Activated T-helper 1 cell treated with anti-CD3 and anti-CD28 coated beads, Interleukin-12 subunit alpha, Interleukin-12 subunit beta, Interleukin-2, Interleukin-4 antibody, amounts not matched to agents 30 ng/mL and 10 ng/mL and 1 ng/mL, durations not matched to agents 14 hours and 24 hours and 36 hours (primary cell): ENCODE measurements at regions of chr3 and their contacts with region 1.

Region 1: DNA sequence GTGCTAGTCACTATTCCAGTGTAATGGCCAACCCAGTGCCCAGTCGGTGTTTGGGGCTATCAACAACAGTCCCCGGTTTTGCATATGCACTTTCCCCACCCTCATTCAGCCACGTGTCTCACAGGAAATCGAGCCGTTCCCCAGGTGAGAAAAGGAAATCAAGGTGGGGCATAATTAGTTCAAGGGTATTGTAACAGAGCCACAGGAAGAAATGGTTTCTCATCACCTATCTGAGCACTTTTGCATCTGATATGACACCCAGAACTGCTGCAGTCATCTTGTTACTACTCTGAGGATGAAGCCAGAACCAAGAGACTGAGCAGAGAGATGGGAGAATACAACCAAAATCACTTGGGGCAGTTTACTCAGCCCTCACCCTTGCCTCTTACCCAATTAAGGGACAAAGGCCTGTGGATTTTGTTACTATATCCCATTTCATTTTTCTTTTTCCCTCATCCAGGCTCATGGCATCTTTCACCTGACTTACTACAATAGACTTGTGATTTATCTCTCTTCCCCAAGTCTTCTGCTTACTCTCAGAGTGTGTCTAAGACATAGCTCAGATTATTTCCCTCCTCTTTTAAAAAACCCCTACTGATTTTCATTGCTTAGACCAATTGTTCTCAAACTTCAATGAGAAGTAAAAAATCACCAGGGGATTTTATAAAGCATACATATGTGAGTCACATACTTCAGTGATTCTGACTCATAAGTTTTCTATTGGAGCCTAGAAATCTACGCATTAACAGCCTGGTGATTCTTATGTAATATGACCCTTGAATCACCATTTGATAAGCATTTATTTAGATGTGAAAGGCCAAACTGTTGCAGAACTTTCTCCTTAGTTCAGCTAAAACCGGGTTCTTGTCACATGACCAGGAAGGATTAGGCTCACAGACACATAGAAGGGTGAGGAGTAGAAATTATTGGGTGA is 40.5 kb downstream of the TRAT1 start:
- DNase-seq: no peak
- H3K4me3 Mint-ChIP-seq: peak overlapping the region; percentile 59
- H3K27ac Mint-ChIP-seq: peak overlapping the region; percentile 96
- H3K4me1 Mint-ChIP-seq: peaks cover 52% of the 10 kb centered on the region
- H3K27me3 Mint-ChIP-seq: no peaks in the 10 kb centered on the region

Region 2: GRCh38 chr3:108662130-108662738 is 200.9 kb before region 1 on chr3:
- intact Hi-C with region 1: loop called (anchors 1 kb)
- DNase-seq: peak; percentile 17
- H3K4me3 Mint-ChIP-seq: no peak overlapping the region
- H3K27ac Mint-ChIP-seq: no peak overlapping the region
- H3K4me1 Mint-ChIP-seq: peaks cover 17% of the 10 kb centered on the region
- H3K27me3 Mint-ChIP-seq: no peaks in the 10 kb centered on the region

Region 3: DNA sequence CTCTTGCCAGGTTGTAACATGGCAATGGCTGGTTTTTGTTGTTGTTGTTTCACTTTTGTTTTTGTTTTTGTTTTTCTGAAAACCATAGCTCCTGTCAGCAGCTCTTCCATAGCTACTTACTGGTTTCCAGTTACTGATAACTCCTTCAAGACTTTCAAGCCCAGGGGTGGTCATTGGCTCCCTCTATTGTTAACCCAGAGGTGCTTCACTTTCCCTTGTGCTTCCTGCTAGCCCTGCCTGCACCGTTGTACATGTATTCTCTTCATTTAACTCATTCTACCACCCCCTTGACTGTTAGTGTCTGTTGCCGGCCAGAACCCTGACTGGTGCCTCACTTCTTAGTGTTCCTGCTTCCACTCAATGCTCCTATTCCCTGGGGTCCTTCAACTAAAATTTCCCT is 44.7 kb before region 1 on chr3:
- intact Hi-C with region 1: loop called (anchors 1 kb)
- DNase-seq: peak; percentile 60
- H3K4me3 Mint-ChIP-seq: peak overlapping the region; percentile 58
- H3K27ac Mint-ChIP-seq: peak overlapping the region; percentile 18
- H3K4me1 Mint-ChIP-seq: peaks cover 45% of the 10 kb centered on the region
- H3K27me3 Mint-ChIP-seq: no peaks in the 10 kb centered on the region

Region 4: DNA sequence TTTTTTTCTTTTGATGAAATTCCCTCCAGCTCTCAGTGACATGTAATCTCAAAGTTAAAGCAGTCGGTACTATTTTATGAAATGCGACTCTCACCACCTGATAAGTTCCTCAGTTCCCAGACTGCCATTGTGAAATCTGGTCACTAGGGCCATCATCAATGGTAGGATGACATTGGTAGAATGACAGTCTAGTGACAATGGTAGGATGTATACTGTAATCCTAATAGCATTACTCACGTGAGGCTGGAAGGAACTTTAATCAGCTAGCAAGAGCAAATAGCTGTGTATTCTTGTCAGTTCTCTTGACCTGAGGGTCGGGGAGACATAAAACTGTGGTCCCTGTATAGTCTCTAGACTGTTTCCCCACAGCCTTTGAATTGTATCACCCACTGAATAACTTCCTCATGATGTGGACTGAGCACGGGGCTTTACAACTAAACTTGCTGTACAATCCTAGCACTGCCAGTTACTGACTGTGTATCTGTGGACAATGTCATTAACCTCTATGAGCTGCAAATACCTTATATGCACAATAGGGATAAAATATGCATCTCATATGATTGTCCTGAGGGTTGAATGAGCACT is 17.3 kb before region 1 on chr3:
- intact Hi-C with region 1: loop called (anchors 1 kb)
- DNase-seq: no peak
- H3K4me3 Mint-ChIP-seq: peak overlapping the region; percentile 48
- H3K27ac Mint-ChIP-seq: peak overlapping the region; percentile 59
- H3K4me1 Mint-ChIP-seq: peaks cover 84% of the 10 kb centered on the region
- H3K27me3 Mint-ChIP-seq: no peaks in the 10 kb centered on the region

Region 5: GRCh38 chr3:108879916-108880315 is 16.8 kb after region 1 on chr3:
- intact Hi-C with region 1: loop called (anchors 2 kb)
- DNase-seq: no peak
- H3K4me3 Mint-ChIP-seq: no peak overlapping the region
- H3K27ac Mint-ChIP-seq: no peak overlapping the region
- H3K4me1 Mint-ChIP-seq: peaks cover 23% of the 10 kb centered on the region
- H3K27me3 Mint-ChIP-seq: no peaks in the 10 kb centered on the region

Region 6: DNA sequence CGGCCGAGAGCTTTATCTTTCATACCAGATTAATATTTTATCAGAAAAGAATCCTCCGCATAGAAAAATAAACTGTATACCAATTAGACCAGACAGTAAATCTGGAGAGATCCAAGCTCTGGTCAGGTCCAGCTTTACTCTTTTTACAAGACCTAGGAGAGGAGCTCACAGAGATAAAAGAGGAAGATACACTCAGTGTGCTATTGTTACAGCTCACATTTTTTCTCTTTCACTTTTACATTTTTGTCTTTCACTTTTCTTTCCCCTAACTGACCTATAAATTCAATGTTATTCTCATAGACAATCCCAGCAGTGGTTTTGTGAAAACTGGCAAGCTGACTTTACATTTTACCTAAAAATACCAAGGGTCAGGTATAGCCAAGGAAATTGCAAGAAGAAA is 34.8 kb after region 1 on chr3:
- intact Hi-C with region 1: loop called (anchors 2 kb)
- DNase-seq: no peak
- H3K4me3 Mint-ChIP-seq: no peak overlapping the region
- H3K27ac Mint-ChIP-seq: peak overlapping the region; percentile 37
- H3K4me1 Mint-ChIP-seq: peaks cover 18% of the 10 kb centered on the region
- H3K27me3 Mint-ChIP-seq: no peaks in the 10 kb centered on the region